ENCODE measurements at regions of chr3 and their contacts with region 1.

Region 1: GRCh38 chr3:160225176-160226025 is at the start of gene C3orf80:
- DNase-seq: peak; percentile 49 to 66
- ATAC-seq: peak; percentile 93
- H3K4me3 ChIP-seq: peak within 1 kb of the TSS; percentile 57
- H3K27ac ChIP-seq: peak within 1 kb of the TSS; percentile 74 to 89
- H3K4me1 ChIP-seq: no peaks in the 10 kb centered on the region
- CTCF ChIP-seq: peak; percentile 58
- EP300 ChIP-seq: no peak
- POLR2A ChIP-seq: peak; percentile 44
- RAD21 ChIP-seq: peak in 1 of 2 experiments; percentile 56; a peak in 3 of 5 replicates
- polyA plus RNA-seq, gene C3orf80: 1.7 TPM in 2 replicates

Region 2: GRCh38 chr3:160133757-160134156 is 91.6 kb before region 1 on chr3:
- CTCF ChIA-PET with region 1: interaction called, 14 read pairs
- POLR2A ChIA-PET with region 1: no interaction called
- DNase-seq: peak in 1 of 2 experiments; percentile 66
- ATAC-seq: peak in 1 of 2 experiments; percentile 62; a peak in 3 of 6 replicates
- H3K4me3 ChIP-seq: no peak overlapping the region
- H3K27ac ChIP-seq: peak overlapping the region; percentile 60 to 85
- H3K4me1 ChIP-seq: peaks cover 45% of the 10 kb centered on the region
- CTCF ChIP-seq: no peak
- EP300 ChIP-seq: no peak
- POLR2A ChIP-seq: no peak
- RAD21 ChIP-seq: peak in 1 of 2 experiments; percentile 28; a peak in 1 of 5 replicates

Region 3: DNA sequence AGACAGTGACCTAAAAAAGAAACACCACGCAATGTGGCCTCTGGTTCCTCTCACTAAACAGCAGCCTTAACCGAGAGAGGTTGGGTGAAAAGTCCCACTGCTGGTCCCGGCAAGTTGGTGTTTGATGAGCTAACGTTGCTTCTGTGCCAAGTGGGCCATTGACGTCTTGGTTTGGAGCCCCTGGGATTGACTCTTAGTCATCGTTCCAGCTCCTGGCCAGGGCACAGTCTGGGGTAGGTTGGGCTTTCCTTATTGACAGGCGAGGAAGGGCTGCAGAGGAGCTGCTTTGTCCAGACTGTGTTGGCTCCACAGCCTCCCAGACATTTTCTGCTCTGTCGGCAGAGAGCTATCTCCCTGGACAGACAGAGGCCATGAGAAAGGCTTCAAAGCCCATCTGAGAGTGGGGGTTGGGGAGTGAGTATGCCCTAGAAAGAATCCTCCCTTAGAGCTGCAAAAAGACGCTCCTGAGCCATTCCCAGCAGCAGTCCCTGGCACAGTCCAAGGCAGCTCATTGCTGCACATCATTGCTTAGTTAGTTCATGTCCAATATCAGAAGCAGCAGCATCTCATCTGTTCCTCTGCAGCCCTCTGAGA is 28.8 kb before region 1 on chr3:
- CTCF ChIA-PET with region 1: interaction called, 10 read pairs
- POLR2A ChIA-PET with region 1: no interaction called
- DNase-seq: no peak
- ATAC-seq: peak; percentile 25 to 70; a peak in 4 of 6 replicates
- H3K4me3 ChIP-seq: no peak overlapping the region
- H3K27ac ChIP-seq: no peak overlapping the region
- H3K4me1 ChIP-seq: no peaks in the 10 kb centered on the region
- CTCF ChIP-seq: no peak
- EP300 ChIP-seq: no peak
- POLR2A ChIP-seq: no peak
- RAD21 ChIP-seq: no peak

Region 4: GRCh38 chr3:160210799-160211221 is 14.6 kb before region 1 on chr3:
- CTCF ChIA-PET with region 1: interaction called, 25 read pairs
- POLR2A ChIA-PET with region 1: no interaction called
- DNase-seq: peak in 1 of 2 experiments; percentile 66
- ATAC-seq: peak; percentile 85 to 88
- H3K4me3 ChIP-seq: no peak overlapping the region
- H3K27ac ChIP-seq: peak overlapping the region; percentile 27 to 39; a peak in 2 of 6 replicates
- H3K4me1 ChIP-seq: peaks cover 6% of the 10 kb centered on the region; the same call in 1 of the 3 replicates
- CTCF ChIP-seq: peak; percentile 43
- EP300 ChIP-seq: no peak
- POLR2A ChIP-seq: no peak
- RAD21 ChIP-seq: peak; percentile 42 to 48; a peak in 4 of 5 replicates